Endothelial cell of umbilical vein (primary cell): ENCODE measurements at regions of chrX and their contacts with region 1.

Region 1: GRCh38 chrX:109475174-109475891 is 6.6 kb downstream of the GUCY2F start:
- DNase-seq: peak; percentile 58
- H3K4me3 ChIP-seq: peak overlapping the region in 1 of 3 experiments; percentile 39
- H3K27ac ChIP-seq: no peak overlapping the region
- H3K4me1 ChIP-seq: peaks cover 14% of the 10 kb centered on the region
- H3K27me3 ChIP-seq: no peaks in the 10 kb centered on the region
- CTCF ChIP-seq: peak; percentile 24 to 32
- POLR2A ChIP-seq: no peak

Region 2: DNA sequence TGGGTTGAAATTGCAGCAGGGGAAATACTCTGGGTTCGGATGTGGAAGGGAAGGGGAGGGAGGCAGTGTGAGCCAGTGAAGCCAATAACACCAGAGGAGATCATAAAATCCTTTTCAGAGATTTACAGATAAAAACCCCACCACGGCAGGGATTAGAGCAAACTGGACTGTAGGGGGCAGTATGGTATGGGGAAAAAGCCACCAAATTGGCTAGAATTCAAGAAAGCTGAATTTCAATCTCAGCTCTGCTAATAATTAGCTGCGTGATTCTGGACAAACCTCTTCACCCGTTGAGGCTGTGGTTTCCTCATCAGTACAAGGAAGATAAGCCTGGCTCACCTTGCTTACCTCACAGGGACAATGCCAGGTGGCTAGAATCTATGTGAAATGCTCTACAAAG is 1275.6 kb before region 1 on chrX:
- CTCF ChIA-PET with region 1: interaction called, 12 read pairs
- POLR2A ChIA-PET with region 1: no interaction called
- dilution Hi-C with region 1: no loop called
- intact Hi-C with region 1: loop called (anchors 1 kb)
- DNase-seq: peak; percentile 44
- H3K4me3 ChIP-seq: no peak overlapping the region
- H3K27ac ChIP-seq: no peak overlapping the region
- H3K4me1 ChIP-seq: no peaks in the 10 kb centered on the region
- H3K27me3 ChIP-seq: no peaks in the 10 kb centered on the region
- CTCF ChIP-seq: peak; percentile 47 to 48
- POLR2A ChIP-seq: no peak

Region 3: DNA sequence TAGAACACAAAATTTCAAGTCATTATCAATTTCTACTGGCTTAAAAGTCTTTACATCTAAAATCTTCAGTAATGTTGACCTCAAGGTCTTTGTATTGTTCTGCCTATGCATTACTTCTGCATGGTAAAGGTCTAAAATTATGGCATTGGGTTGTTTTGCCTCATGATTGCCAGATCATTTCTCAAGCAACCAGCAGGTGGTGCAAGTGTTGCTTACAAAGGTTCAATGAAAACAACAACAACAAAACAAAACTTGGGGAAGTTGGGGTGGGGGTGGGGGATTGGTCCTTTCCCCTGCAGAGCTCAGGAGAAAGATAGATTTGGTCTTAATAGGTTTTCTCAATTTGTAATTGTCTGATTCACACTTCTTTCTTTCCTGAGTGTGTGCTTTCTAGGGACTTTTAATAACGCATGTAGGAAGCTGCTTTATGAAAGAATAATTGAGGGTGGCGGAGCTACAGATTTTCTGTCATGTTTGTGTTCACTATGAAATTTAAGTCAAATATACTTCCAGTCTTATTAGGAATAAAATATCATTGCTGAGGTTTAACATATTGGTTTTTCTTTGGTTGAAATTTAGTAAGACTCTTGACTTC is 890.6 kb before region 1 on chrX:
- CTCF ChIA-PET with region 1: no interaction called
- POLR2A ChIA-PET with region 1: no interaction called
- dilution Hi-C with region 1: no loop called
- intact Hi-C with region 1: loop called (anchors 1 kb)
- DNase-seq: peak; percentile 7
- H3K4me3 ChIP-seq: no peak overlapping the region
- H3K27ac ChIP-seq: no peak overlapping the region
- H3K4me1 ChIP-seq: no peaks in the 10 kb centered on the region
- H3K27me3 ChIP-seq: no peaks in the 10 kb centered on the region
- CTCF ChIP-seq: peak in 1 of 2 donors; percentile 21
- POLR2A ChIP-seq: no peak

Region 4: GRCh38 chrX:108699368-108699767 is 776.0 kb before region 1 on chrX:
- CTCF ChIA-PET with region 1: interaction called, 61 read pairs
- POLR2A ChIA-PET with region 1: no interaction called
- dilution Hi-C with region 1: no loop called
- intact Hi-C with region 1: no loop called
- DNase-seq: peak; percentile 42
- H3K4me3 ChIP-seq: no peak overlapping the region
- H3K27ac ChIP-seq: no peak overlapping the region
- H3K4me1 ChIP-seq: no peaks in the 10 kb centered on the region
- H3K27me3 ChIP-seq: no peaks in the 10 kb centered on the region
- CTCF ChIP-seq: peak; percentile 7 to 21
- POLR2A ChIP-seq: no peak

Region 5: GRCh38 chrX:108763559-108763958 is 711.8 kb before region 1 on chrX:
- CTCF ChIA-PET with region 1: no interaction called
- POLR2A ChIA-PET with region 1: no interaction called
- dilution Hi-C with region 1: no loop called
- intact Hi-C with region 1: no loop called
- DNase-seq: no peak
- H3K4me3 ChIP-seq: no peak overlapping the region
- H3K27ac ChIP-seq: no peak overlapping the region
- H3K4me1 ChIP-seq: no peaks in the 10 kb centered on the region
- H3K27me3 ChIP-seq: no peaks in the 10 kb centered on the region
- CTCF ChIP-seq: no peak
- POLR2A ChIP-seq: no peak

Region 6: GRCh38 chrX:109347632-109348031 is 127.7 kb before region 1 on chrX:
- CTCF ChIA-PET with region 1: no interaction called
- POLR2A ChIA-PET with region 1: no interaction called
- dilution Hi-C with region 1: no loop called
- intact Hi-C with region 1: loop called (anchors 10 kb)
- DNase-seq: peak; percentile 72
- H3K4me3 ChIP-seq: no peak overlapping the region
- H3K27ac ChIP-seq: peak overlapping the region; percentile 3
- H3K4me1 ChIP-seq: peaks cover 28% of the 10 kb centered on the region
- H3K27me3 ChIP-seq: no peaks in the 10 kb centered on the region
- CTCF ChIP-seq: no peak
- POLR2A ChIP-seq: no peak

Region 7: DNA sequence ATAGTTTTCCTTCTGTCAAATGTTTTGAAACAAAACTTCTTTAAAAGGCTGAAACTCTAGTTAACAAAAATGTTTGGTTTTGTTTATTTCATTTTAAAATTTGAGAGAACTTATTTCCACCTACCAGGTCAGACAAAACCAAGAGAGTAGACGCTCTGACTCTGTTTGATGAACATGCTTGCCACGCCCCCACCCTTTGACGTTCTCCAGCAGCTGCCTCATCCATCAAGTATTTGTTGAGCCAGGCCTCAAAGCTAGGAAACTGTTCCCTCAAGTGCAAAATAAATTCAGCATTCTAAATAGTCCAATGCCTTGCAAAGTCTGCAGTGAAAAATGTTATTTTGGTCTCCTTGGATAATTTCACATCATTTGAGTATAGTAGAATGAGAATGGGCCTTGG is 115.0 kb before region 1 on chrX:
- CTCF ChIA-PET with region 1: no interaction called
- POLR2A ChIA-PET with region 1: no interaction called
- dilution Hi-C with region 1: no loop called
- intact Hi-C with region 1: no loop called
- DNase-seq: no peak
- H3K4me3 ChIP-seq: no peak overlapping the region
- H3K27ac ChIP-seq: no peak overlapping the region
- H3K4me1 ChIP-seq: no peaks in the 10 kb centered on the region
- H3K27me3 ChIP-seq: peaks cover 0 to 2% of the 10 kb centered on the region in 2 experiments
- CTCF ChIP-seq: no peak
- POLR2A ChIP-seq: no peak

Region 8: GRCh38 chrX:109485470-109486340 is 10.4 kb after region 1 on chrX:
- CTCF ChIA-PET with region 1: interaction called, 11 read pairs
- POLR2A ChIA-PET with region 1: no interaction called
- dilution Hi-C with region 1: no loop called
- intact Hi-C with region 1: no loop called
- DNase-seq: peak; percentile 77
- H3K4me3 ChIP-seq: no peak overlapping the region
- H3K27ac ChIP-seq: no peak overlapping the region
- H3K4me1 ChIP-seq: no peaks in the 10 kb centered on the region
- H3K27me3 ChIP-seq: peaks cover 5 to 6% of the 10 kb centered on the region in 2 experiments
- CTCF ChIP-seq: peak; percentile 71 to 83
- POLR2A ChIP-seq: no peak